CD8-positive, alpha-beta memory T cell (primary cell): ENCODE measurements at regions of chr2 and their contacts with region 1.

Region 1: DNA sequence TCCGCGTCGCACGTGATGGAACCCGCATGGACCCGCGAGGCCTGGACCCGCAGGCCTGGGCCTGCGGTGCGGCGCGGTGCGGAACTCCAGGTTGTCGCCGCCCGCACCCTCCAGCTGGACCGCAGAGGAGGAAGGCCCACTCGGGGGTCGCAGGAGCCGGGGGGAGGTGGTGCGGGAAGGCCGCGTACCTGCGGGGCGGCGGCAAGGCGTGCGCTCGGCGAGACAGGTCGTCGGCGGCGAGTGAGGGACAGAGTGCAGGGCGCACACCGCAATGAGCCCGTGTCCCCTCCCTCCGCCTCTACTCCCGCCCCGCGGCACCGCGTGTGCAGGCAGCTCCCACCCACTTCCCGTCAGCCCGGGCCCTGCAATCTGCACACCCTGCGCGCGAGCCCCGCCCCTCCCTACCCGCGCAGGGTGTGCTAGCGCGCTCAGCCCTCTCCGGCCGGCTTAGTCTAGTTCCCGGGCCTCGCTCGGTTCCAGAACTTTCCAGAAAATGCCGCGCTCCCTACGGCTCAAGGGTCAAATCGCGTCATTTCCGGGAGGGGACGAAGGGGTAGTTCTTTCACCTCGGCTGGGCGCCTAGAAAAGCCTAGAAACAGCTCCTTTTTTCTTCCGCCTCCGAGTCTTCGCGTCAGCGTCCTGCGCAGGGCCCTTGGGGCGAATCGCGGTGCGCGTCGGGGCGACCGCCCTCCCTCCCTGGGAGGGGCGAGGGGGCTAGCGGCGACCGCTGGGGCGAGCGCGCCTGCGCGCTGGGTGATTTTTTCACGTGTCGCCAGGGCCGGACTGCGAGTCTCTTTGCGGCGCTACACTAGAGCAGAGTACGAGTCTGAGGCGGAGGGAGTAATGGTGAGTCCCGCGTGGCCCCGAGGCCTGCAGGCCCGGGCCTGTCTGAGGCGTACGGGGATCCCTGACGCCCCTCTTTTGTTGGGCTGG is at the starts of genes HSPD1 and HSPE1:
- DNase-seq: peak; percentile 96 to 98 (median 97)
- H3K4me3 ChIP-seq: peak within 1 kb of the TSS; percentile 95
- H3K4me3 Mint-ChIP-seq: peak within 1 kb of the TSS; percentile 87 to 99 (median 90)
- H3K27ac ChIP-seq: peak within 1 kb of the TSS; percentile 90
- H3K27ac Mint-ChIP-seq: peak within 1 kb of the TSS; percentile 86 to 99 (median 98)
- H3K4me1 ChIP-seq: peaks cover 52% of the 10 kb centered on the region
- H3K4me1 Mint-ChIP-seq: peaks cover 55 to 70% (median 67%) of the 10 kb centered on the region in 3 donors
- H3K27me3 ChIP-seq: no peaks in the 10 kb centered on the region
- H3K27me3 Mint-ChIP-seq: no peaks in the 10 kb centered on the region
- total RNA-seq, gene HSPD1: 1,152 to 1,183 TPM
- total RNA-seq, gene HSPE1: 449 to 476 TPM

Region 2: DNA sequence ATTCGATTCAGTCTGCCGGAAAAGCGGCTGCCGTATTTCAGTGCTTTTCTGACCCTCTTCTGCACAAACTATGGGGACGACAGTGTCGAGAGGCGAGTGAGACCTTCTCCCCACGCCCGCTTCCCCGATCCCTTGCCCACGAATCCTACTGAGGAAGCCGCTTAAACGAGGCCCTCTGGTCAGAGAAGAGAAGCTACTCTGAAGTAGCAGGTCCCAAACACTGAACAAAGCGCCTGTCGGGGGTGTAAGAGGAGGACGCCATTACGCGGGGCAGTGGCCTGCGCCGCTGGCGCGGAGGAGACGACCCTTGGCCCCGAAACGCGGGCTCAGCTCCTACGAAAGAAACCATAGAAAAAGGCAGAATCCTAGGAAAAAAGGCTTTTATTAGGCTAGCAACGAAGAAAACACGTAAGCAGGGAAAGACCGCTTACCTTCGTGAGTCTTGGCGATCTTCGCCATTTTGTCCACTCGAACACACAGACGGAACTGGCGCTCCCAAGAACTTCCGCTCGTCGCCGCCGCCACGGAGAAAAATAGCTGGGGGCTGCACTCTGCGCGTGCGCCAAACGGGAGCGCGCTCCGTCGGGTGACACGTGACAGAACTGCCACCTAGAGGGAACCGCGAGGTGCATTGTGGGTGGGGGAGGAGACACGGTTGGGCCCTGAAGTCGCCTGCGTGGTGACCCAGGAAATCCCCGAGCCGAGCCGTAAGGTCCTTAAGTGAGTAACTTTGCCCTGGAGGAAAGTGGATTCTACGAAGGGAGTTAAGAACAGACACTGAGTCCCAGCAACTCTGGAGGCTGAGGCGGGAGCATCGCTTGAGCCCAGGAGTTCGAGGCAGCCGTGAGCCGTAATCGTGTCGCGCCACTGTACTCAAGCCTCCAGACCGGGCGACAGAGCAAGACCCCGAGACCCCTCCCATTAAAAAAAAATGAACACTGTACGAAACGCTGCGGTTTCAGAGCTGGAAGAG is 65.0 kb before region 1 on chr2 and contains the start of gene SF3B1:
- CTCF ChIA-PET with region 1: interaction called, 4 read pairs
- POLR2A ChIA-PET with region 1: interaction called, 25 read pairs
- DNase-seq: peak; percentile 99 to 100 (median 99)
- H3K4me3 ChIP-seq: peak within 1 kb of the TSS; percentile 95
- H3K4me3 Mint-ChIP-seq: peak within 1 kb of the TSS; percentile 95 to 100 (median 100)
- H3K27ac ChIP-seq: peak within 1 kb of the TSS; percentile 99
- H3K27ac Mint-ChIP-seq: peak within 1 kb of the TSS; percentile 98 to 100 (median 100)
- H3K4me1 ChIP-seq: peaks cover 46% of the 10 kb centered on the region
- H3K4me1 Mint-ChIP-seq: peaks cover 55 to 60% (median 58%) of the 10 kb centered on the region in 3 donors
- H3K27me3 ChIP-seq: no peaks in the 10 kb centered on the region
- H3K27me3 Mint-ChIP-seq: no peaks in the 10 kb centered on the region
- total RNA-seq, gene SF3B1: 281 to 287 TPM

Region 3: DNA sequence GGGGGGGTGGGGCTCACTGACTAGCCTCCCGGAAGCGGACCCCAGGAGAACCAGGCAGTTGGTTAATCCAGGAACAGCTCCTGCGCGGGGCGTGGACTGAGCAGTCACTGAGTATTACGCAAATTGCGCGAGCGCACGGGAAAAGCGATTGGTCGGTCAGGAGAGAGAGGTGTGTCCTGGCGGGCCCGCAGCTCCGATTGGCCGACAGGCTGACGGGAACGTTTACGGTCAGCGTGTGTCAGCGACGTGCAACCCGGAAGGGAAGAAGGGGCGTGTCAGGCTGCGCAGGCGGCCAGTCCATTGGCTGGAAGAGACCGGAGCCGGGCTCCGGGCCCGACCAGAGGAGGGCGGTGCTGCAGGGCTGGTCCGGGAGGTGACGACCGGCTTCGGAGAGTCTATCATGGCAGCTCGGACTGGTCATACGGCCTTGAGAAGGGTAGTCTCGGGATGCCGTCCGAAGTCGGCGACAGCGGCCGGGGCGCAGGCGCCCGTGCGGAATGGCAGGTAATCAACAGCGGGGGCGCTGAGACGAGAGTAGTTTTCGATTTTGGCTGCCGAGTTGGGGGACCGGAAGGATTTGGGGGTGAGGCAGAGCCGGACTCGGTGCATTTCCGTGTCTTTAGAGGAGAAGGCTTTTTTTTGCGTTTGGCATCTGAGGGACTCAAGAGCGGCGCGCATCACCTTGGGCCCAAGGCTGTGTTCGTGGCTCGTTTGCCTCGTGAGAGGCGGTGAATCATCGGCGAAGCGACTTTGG is 46.5 kb before region 1 on chr2 and contains the start of gene COQ10B:
- CTCF ChIA-PET with region 1: interaction called, 7 read pairs
- POLR2A ChIA-PET with region 1: interaction called, 40 read pairs
- DNase-seq: peak; percentile 97 to 100 (median 99)
- H3K4me3 ChIP-seq: peak within 1 kb of the TSS; percentile 83
- H3K4me3 Mint-ChIP-seq: peak within 1 kb of the TSS; percentile 94 to 100 (median 99)
- H3K27ac ChIP-seq: peak within 1 kb of the TSS; percentile 99
- H3K27ac Mint-ChIP-seq: peak within 1 kb of the TSS; percentile 97 to 100 (median 100)
- H3K4me1 ChIP-seq: peaks cover 29% of the 10 kb centered on the region
- H3K4me1 Mint-ChIP-seq: peaks cover 40 to 54% (median 51%) of the 10 kb centered on the region in 3 donors
- H3K27me3 ChIP-seq: no peaks in the 10 kb centered on the region
- H3K27me3 Mint-ChIP-seq: peaks cover 0 to 5% of the 10 kb centered on the region in 2 donors
- total RNA-seq, gene COQ10B: 23.4 to 23.7 TPM

Region 4: GRCh38 chr2:197480165-197481036 is 19.5 kb before region 1 on chr2:
- CTCF ChIA-PET with region 1: no interaction called
- POLR2A ChIA-PET with region 1: interaction called, 12 read pairs
- DNase-seq: no peak
- H3K4me3 ChIP-seq: no peak overlapping the region
- H3K4me3 Mint-ChIP-seq: peak overlapping the region in 1 of 7 donors; percentile 58
- H3K27ac ChIP-seq: no peak overlapping the region
- H3K27ac Mint-ChIP-seq: peak overlapping the region in 3 of 8 donors; percentile 3 to 71 (median 30)
- H3K4me1 ChIP-seq: no peaks in the 10 kb centered on the region
- H3K4me1 Mint-ChIP-seq: peaks cover 0 to 2% (median 0%) of the 10 kb centered on the region in 3 donors
- H3K27me3 ChIP-seq: no peaks in the 10 kb centered on the region
- H3K27me3 Mint-ChIP-seq: no peaks in the 10 kb centered on the region

Region 5: DNA sequence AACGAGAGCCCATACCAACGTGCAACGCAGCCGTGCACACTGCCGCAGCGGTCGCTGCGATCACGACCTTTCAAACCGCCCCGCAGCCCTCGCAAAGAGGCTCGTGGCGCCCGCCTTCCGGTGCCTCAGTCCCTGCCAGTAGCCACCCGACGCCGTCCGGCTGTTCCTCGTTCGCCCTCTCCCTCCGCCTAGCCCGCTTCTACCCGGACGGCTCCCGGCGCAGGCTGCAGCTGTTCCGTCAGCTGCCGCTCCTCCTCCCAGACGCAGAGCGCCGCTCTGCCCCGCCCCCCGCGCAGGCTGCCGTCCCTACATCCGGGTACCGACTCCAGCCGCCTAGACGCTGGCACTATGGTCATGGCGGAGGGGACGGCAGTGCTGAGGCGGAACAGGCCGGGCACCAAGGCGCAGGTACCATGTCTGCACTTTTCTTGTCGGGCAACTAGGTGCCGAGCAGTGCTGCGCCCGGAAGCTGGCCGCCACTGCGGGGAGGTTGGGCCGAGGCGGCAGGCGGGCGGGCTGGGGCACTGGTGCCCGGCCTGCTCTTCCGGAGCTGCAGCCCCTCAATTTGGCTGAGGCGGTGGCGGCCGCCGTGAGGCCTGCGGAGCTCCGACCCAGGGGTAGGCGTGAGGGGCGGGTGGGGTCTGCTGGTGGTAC is 16.0 kb after region 1 on chr2 and contains the start of gene MOB4:
- CTCF ChIA-PET with region 1: interaction called, 14 read pairs
- POLR2A ChIA-PET with region 1: interaction called, 101 read pairs
- DNase-seq: peak; percentile 92 to 96 (median 93)
- H3K4me3 ChIP-seq: peak within 1 kb of the TSS; percentile 91
- H3K4me3 Mint-ChIP-seq: peak within 1 kb of the TSS; percentile 88 to 99 (median 97)
- H3K27ac ChIP-seq: peak within 1 kb of the TSS; percentile 94
- H3K27ac Mint-ChIP-seq: peak within 1 kb of the TSS; percentile 90 to 97 (median 96)
- H3K4me1 ChIP-seq: peaks cover 25% of the 10 kb centered on the region
- H3K4me1 Mint-ChIP-seq: peaks cover 36 to 53% (median 44%) of the 10 kb centered on the region in 3 donors
- H3K27me3 ChIP-seq: no peaks in the 10 kb centered on the region
- H3K27me3 Mint-ChIP-seq: no peaks in the 10 kb centered on the region
- total RNA-seq, gene MOB4: 21.9 to 26.2 TPM

Region 6: GRCh38 chr2:197705121-197705911 is 205.5 kb after region 1 on chr2 and contains the start of gene MARS2:
- CTCF ChIA-PET with region 1: interaction called, 10 read pairs
- POLR2A ChIA-PET with region 1: interaction called, 15 read pairs
- DNase-seq: peak; percentile 90 to 95 (median 91)
- H3K4me3 ChIP-seq: peak within 1 kb of the TSS; percentile 88
- H3K4me3 Mint-ChIP-seq: peak within 1 kb of the TSS; percentile 86 to 95 (median 92)
- H3K27ac ChIP-seq: peak within 1 kb of the TSS; percentile 60
- H3K27ac Mint-ChIP-seq: peak within 1 kb of the TSS; percentile 86 to 99 (median 94)
- H3K4me1 ChIP-seq: peaks cover 40% of the 10 kb centered on the region
- H3K4me1 Mint-ChIP-seq: peaks cover 39 to 57% (median 56%) of the 10 kb centered on the region in 3 donors
- H3K27me3 ChIP-seq: no peaks in the 10 kb centered on the region
- H3K27me3 Mint-ChIP-seq: no peaks in the 10 kb centered on the region
- total RNA-seq, gene MARS2: 27.1 to 27.9 TPM